Activated CD4-positive, alpha-beta T cell treated with anti-CD3 and anti-CD28 coated beads, Interleukin-2, amount 10 ng/mL, durations not matched to agents 24 days and 14 days (primary cell): ENCODE measurements at regions of chr2 and their contacts with region 1.

Region 1: DNA sequence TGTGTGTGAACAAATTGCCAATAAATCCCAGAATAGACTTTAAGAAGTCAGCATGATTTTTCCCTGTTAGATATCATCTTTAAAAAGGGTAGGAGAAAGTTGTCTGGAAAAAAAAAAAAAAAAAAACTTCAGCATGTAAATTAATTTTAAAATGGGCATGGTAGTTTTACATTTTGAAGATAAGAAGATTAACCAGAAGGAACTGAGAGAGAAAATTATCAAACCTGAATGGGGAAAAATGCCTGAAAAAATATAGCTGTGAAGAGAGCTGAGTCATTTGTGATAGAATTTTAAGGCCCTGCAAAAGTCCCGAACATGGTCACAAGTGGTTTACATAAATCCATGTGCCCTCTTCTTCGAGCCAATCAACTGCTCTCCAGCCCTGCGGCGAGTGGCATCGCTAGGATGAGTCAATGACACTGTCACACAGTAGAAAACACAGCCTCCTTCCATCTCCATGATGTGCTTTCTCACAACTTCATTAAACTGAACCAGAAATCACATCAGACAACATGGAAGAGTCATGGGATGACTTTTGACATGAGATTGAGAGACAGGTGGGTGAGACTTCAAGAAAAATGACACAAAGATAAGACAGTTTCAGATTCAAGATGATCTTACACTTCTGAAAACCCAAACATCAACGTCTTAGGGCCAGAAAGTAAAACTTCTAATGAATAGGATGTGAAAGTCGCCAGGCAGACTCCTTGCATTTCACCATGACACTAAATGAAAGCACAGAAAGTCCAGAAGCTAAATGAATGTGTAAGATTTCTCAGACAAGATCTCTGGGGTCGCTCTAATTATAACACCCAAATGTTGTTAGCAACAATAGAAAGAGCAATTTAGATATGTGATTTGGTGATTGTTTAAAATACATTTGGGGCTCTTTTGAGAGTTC is 273.0 kb upstream of the ID2 start:
- DNase-seq: peak; percentile 82
- H3K4me3 Mint-ChIP-seq: peak overlapping the region; percentile 11
- H3K27ac Mint-ChIP-seq: peak overlapping the region; percentile 85
- H3K4me1 Mint-ChIP-seq: peaks cover 26% of the 10 kb centered on the region
- H3K27me3 Mint-ChIP-seq: peaks cover 5% of the 10 kb centered on the region

Region 2: DNA sequence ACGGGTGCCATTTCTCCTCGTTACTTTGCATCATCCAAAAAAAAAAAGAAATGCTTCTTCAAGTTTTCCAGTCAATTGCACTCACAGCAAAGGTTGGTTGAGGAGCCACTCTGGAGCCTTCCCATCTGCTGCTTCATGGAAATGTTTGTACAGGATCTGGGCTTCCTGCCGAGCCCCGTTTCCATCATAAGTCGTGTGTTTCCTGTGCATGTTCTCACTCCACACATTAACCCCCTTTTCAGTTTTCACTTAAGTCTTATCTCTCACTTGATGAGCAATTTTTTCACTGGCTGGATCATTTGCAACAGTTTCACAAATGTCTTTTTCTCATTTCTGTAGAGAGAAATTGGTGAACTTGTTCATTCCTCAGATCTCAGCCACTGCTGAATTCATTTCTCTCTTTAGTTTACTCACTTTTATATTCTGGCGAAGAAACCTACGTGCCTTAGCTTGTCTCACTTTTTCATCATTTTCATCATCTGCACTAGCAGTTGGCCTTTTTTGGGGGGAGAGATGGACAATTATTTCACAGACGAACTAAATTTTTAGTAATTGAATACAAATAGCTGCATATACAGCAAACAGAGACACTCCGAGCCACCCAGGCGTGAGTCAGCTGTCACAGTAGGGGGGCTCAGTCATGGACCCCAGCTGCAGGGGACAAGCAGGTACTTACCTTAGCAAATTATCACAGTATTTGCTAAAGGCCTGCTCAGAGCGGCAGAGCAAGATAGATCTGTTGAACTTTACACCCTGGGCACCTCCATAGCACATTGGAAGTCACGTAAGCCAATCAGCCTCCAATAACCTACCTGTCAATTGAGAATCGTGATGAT is 477.8 kb before region 1 on chr2:
- intact Hi-C with region 1: loop called (anchors 5 kb)
- DNase-seq: peak; percentile 54
- H3K4me3 Mint-ChIP-seq: peak overlapping the region; percentile 1
- H3K27ac Mint-ChIP-seq: peak overlapping the region; percentile 76
- H3K4me1 Mint-ChIP-seq: peaks cover 10% of the 10 kb centered on the region
- H3K27me3 Mint-ChIP-seq: no peaks in the 10 kb centered on the region

Region 3: DNA sequence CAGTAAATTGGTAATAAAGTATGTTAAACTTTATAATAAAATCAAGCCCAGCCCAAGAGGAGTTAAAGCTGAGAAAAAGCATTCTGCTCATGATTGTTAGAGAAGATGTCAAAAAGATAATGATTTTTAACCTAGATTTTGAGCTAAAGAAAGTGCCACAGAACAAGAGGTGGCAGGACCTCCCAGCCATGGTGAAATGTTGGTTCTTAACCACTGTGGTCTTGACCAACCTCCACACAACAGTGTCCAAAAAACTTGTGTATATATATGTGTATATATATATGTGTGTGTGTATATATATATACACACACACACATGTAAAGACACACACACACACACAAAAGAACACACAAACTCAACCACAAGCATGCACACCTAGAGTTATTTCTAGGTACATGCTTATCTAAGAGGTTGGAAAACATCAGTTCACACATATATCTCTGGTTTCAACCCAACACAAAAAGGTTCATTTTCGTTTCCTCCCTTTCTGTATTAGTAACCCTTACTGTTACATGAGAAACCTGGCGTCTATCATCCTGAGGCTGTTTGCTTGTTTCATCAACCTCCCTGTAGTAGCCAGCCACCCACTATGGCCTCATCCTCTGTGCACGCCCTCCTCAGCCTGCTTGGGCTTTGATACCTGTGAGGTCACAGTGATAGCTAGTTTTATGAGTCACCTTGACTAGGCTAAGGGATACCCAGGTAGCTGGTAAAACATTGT is 358.8 kb before region 1 on chr2:
- intact Hi-C with region 1: loop called (anchors 1 kb)
- DNase-seq: peak; percentile 81
- H3K4me3 Mint-ChIP-seq: peak overlapping the region; percentile 7
- H3K27ac Mint-ChIP-seq: peak overlapping the region; percentile 84
- H3K4me1 Mint-ChIP-seq: peaks cover 23% of the 10 kb centered on the region
- H3K27me3 Mint-ChIP-seq: no peaks in the 10 kb centered on the region

Region 4: DNA sequence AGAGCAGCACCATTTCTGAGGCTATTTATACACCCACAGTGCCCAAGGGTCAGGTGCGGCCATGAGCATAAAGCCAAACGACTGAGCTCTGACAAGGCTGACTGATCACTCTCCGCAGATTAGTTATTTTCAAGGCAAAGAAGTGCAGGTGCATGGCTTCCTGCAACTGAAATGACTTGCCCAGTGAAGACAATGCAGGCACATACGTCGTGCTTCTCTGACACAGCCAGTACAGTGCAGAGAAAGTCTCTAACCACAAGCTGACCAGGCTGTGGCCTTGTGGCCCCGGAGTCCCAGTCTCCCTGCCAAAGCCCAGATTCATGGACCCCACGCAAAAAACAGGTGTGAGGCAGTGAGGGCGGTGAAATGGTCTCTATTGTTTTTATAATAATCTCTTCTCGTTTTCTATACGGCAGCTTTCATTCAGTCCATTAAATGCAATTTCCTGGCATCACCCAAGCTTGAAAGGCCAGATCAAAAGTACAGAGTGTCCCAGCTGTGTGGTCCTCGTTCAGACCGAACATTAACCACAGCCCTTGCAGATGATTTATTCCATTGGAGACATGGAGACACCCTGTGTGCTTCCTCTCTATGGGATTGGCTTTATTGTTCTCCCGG is 173.9 kb before region 1 on chr2:
- intact Hi-C with region 1: loop called (anchors 1 kb)
- DNase-seq: no peak
- H3K4me3 Mint-ChIP-seq: no peak overlapping the region
- H3K27ac Mint-ChIP-seq: no peak overlapping the region
- H3K4me1 Mint-ChIP-seq: peaks cover 22% of the 10 kb centered on the region
- H3K27me3 Mint-ChIP-seq: peaks cover 1% of the 10 kb centered on the region

Region 5: DNA sequence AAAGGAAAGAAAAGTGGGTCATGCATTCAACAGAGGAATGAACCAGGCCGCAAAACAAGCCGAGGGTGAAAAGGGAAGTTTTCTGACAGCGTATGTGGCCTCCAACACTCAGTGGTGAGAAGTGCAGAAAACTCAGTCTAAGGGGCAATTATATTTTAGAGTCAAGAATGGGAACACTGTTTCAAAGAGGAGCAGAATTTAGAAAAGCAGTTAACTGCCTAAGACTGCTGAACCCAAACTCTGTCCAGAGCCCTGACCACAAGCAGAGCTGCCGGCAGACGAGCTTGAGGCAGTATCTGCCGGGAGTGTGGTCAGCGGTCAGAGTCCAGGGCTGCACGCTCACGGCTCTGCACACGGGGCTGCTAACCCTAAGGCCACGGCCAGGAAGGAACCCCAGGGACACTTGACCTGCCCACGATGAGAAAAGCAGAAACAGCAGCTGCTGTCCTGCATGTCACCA is 73.9 kb before region 1 on chr2:
- intact Hi-C with region 1: loop called (anchors 2 kb)
- DNase-seq: no peak
- H3K4me3 Mint-ChIP-seq: no peak overlapping the region
- H3K27ac Mint-ChIP-seq: no peak overlapping the region
- H3K4me1 Mint-ChIP-seq: peaks cover 19% of the 10 kb centered on the region
- H3K27me3 Mint-ChIP-seq: peaks cover 11% of the 10 kb centered on the region

Region 6: DNA sequence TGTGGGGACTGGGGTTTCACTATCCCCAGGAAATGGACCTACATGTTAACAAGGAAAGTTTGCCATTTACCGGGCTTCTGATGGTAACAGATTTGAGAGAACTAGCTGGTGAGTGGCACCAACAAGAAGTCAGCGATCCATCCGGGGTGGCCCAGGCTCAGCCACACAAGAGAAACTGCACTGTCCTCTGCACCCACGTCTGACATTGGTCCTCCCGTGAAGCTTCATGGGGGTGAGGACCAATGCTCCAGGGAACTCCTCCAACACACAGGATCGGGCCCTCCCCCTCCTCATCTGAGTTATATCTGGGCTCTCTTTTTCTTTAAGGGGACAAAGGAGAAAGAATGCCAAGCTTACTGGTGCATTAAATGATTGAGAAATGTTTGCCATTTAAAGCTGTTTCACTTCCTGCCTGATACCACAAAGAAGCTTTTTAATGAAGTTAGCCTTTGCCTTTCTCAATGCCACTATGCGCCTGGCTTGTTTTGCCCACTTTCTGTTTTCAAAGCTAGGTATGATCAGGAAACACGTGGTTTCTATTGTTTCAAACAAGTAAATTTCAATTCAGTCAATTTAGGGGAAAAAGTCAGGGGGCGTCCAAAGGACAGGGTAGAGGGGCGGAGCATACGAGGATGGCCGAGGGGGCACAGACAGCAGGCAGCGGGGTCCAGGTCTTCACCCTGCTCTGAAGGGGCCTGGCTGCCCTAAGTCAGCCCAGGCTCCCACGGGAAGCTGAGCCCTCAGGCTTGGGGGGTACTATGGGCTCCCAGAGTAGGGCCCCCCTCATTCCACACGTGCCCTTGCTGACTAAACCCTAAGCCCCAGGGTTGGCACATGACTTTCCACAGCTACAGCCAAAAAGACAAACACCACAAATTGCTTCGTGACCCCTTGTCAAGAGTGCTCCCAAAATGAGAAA is 69.0 kb after region 1 on chr2:
- intact Hi-C with region 1: loop called (anchors 1 kb)
- DNase-seq: peak; percentile 76
- H3K4me3 Mint-ChIP-seq: peak overlapping the region; percentile 53
- H3K27ac Mint-ChIP-seq: peak overlapping the region; percentile 84
- H3K4me1 Mint-ChIP-seq: peaks cover 84% of the 10 kb centered on the region
- H3K27me3 Mint-ChIP-seq: no peaks in the 10 kb centered on the region

Region 7: GRCh38 chr2:8693155-8693821 is 284.5 kb after region 1 on chr2:
- intact Hi-C with region 1: no loop called
- DNase-seq: peak; percentile 82
- H3K4me3 Mint-ChIP-seq: peak overlapping the region; percentile 64
- H3K27ac Mint-ChIP-seq: no peak overlapping the region
- H3K4me1 Mint-ChIP-seq: peaks cover 3% of the 10 kb centered on the region
- H3K27me3 Mint-ChIP-seq: peaks cover 27% of the 10 kb centered on the region